Cardiac septum (tissue), 1 donor: ENCODE measurements at regions of chr12 and their contacts with region 1.

Region 1: GRCh38 chr12:10749700-10750384 is 26.7 kb upstream of the YBX3 start:
- DNase-seq: no peak

Region 2: GRCh38 chr12:10613349-10614055 is 136.3 kb before region 1 on chr12 and contains the start of gene MAGOHB:
- intact Hi-C with region 1: loop called (anchors 5 kb)
- DNase-seq: peak; percentile 96
- total RNA-seq, gene MAGOHB: 11.7 TPM

Region 3: DNA sequence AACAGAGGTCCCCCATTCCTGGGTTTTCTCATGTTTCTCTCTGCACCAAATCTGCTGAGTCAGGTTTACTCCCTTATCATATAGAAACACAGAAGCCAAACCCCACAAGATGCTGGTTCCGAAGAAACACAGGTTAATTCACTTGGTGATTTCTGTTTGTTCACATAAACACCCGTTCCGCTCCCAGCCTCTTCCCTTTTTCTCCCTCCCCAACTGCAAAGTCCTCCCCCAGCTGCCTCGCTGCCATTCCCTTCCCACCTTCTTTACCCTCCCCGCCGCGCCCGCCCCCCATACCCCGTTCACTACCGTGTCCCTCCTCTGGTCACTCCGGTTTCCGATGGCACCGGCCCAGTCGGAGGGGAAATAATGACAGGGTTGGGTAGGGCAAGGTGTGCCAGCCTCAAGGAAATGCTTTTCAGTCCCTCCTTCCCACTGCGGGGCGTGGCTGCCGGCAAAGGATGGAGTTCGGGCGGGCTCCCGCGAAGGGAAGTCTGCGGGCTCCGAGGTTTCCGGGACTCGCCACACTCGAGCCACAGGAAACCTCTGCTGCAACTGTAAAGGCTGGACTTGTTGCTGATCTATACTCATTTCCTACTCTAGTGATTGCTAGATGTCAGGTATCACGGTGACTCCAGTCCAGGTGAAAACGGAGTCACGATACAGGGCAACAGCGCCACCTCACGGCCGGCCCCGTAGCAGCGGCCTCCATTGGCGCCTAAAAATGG is 76.0 kb before region 1 on chr12 and contains the start of gene STYK1:
- intact Hi-C with region 1: loop called (anchors 2 kb)
- DNase-seq: peak; percentile 75
- total RNA-seq, gene STYK1: 0.16 TPM

Region 4: GRCh38 chr12:10824957-10825356 is 75.1 kb after region 1 on chr12:
- intact Hi-C with region 1: no loop called
- DNase-seq: no peak